CD8-positive, alpha-beta T cell (primary cell): ENCODE measurements at regions of chr7 and their contacts with region 1.

Region 1: GRCh38 chr7:148884299-148885022 is 370 bp upstream of the EZH2 start:
- DNase-seq: peak; percentile 87 to 97 (median 93)
- ATAC-seq: peak; percentile 89
- H3K4me3 ChIP-seq: peak overlapping the region; percentile 54 to 61
- H3K4me3 Mint-ChIP-seq: peak overlapping the region; percentile 87
- H3K27ac ChIP-seq: peak overlapping the region; percentile 47 to 67
- H3K27ac Mint-ChIP-seq: peak overlapping the region; percentile 89
- H3K4me1 ChIP-seq: peaks cover 8% of the 10 kb centered on the region
- H3K4me1 Mint-ChIP-seq: peaks cover 24% of the 10 kb centered on the region
- H3K27me3 ChIP-seq: peaks cover 0 to 4% of the 10 kb centered on the region in 2 experiments
- H3K27me3 Mint-ChIP-seq: no peaks in the 10 kb centered on the region
- CTCF ChIP-seq: no peak

Region 2: DNA sequence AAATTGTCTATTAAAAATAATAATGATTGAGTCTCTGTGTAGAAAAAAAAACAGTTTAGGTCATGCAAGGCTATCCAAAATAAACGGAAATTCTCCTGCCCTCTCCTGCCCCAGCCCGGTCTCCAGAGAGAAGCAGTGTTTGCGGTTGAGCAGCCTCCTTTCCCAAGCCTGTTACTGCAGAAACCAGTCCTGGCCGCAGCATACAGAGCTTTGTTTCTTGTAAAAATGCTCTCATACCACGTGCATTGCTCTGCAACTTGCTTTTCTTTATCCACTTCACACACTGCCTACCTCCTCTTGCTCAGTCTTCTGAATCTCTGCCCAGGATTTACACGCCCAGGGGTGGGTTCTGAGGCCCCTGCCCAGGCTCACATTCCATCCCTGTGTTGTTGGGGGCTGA is 220.1 kb before region 1 on chr7:
- CTCF ChIA-PET with region 1: no interaction called
- POLR2A ChIA-PET with region 1: no interaction called
- intact Hi-C with region 1: no loop called
- DNase-seq: no peak
- ATAC-seq: no peak
- H3K4me3 ChIP-seq: no peak overlapping the region
- H3K4me3 Mint-ChIP-seq: no peak overlapping the region
- H3K27ac ChIP-seq: no peak overlapping the region
- H3K27ac Mint-ChIP-seq: no peak overlapping the region
- H3K4me1 ChIP-seq: no peaks in the 10 kb centered on the region
- H3K4me1 Mint-ChIP-seq: peaks cover 6% of the 10 kb centered on the region
- H3K27me3 ChIP-seq: no peaks in the 10 kb centered on the region
- H3K27me3 Mint-ChIP-seq: no peaks in the 10 kb centered on the region
- CTCF ChIP-seq: no peak

Region 3: GRCh38 chr7:148856891-148857290 is 27.6 kb before region 1 on chr7:
- CTCF ChIA-PET with region 1: interaction called, 9 read pairs
- POLR2A ChIA-PET with region 1: interaction called, 5 read pairs
- intact Hi-C with region 1: loop called (anchors 2 kb)
- DNase-seq: peak in 2 of 9 experiments; percentile 34 to 47
- ATAC-seq: no peak
- H3K4me3 ChIP-seq: no peak overlapping the region
- H3K4me3 Mint-ChIP-seq: no peak overlapping the region
- H3K27ac ChIP-seq: no peak overlapping the region
- H3K27ac Mint-ChIP-seq: no peak overlapping the region
- H3K4me1 ChIP-seq: no peaks in the 10 kb centered on the region
- H3K4me1 Mint-ChIP-seq: peaks cover 12% of the 10 kb centered on the region
- H3K27me3 ChIP-seq: no peaks in the 10 kb centered on the region
- H3K27me3 Mint-ChIP-seq: no peaks in the 10 kb centered on the region
- CTCF ChIP-seq: no peak

Region 4: DNA sequence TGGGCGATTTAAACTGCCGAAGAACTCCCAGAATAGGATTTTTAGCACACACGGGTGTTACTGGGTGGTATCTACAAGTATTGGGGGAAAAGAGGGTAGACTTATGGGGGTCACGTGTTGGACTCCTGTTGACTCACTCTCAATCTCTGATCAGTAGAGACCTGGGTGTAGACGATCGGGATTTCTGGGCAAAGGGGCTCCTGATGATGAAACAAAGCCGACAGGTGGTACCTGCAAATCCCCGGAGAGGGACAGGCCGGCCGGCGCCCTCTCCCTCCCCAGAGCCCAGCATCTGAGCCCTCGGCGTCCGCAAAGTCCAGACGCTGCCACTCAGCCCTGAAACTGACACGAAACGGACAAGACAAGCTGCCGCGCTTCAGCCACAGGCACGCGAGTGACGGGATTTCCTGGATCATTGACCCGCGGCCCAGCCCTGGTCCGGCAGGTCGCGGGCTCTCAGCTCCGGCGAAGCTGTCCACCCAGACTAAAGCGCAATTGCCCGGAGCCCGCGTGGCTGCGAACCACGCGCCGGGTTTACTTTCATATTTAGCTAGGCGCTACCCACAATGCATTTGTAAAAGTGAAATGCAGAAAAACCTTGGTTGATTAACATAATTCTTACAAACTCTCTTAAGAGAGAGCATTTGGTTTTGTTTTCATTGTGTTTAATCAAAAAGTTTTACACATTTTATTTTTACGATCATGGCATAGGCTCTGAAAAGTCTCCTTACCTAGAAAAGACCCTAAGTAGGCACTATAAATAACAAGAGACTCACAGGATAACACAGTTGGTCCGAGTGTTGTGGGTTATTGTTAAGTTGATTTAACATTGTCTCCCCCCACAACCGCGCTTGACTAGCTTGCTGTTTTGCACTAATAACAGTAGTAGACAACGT is 56.5 kb after region 1 on chr7:
- CTCF ChIA-PET with region 1: interaction called, 9 read pairs
- POLR2A ChIA-PET with region 1: interaction called, 17 read pairs
- intact Hi-C with region 1: loop called (anchors 1 kb)
- DNase-seq: peak; percentile 31 to 87 (median 66)
- ATAC-seq: peak; percentile 65
- H3K4me3 ChIP-seq: peak overlapping the region; percentile 90 to 96
- H3K4me3 Mint-ChIP-seq: peak overlapping the region; percentile 98
- H3K27ac ChIP-seq: peak overlapping the region; percentile 89 to 91
- H3K27ac Mint-ChIP-seq: peak overlapping the region; percentile 98
- H3K4me1 ChIP-seq: peaks cover 9% of the 10 kb centered on the region
- H3K4me1 Mint-ChIP-seq: peaks cover 17% of the 10 kb centered on the region
- H3K27me3 ChIP-seq: no peaks in the 10 kb centered on the region
- H3K27me3 Mint-ChIP-seq: no peaks in the 10 kb centered on the region
- CTCF ChIP-seq: no peak

Region 5: GRCh38 chr7:148987010-148987750 is 102.7 kb after region 1 on chr7:
- CTCF ChIA-PET with region 1: no interaction called
- POLR2A ChIA-PET with region 1: interaction called, 7 read pairs
- intact Hi-C with region 1: loop called (anchors 1 to 2 kb)
- DNase-seq: peak; percentile 43 to 93 (median 80)
- ATAC-seq: peak; percentile 76
- H3K4me3 ChIP-seq: peak overlapping the region; percentile 82 to 97
- H3K4me3 Mint-ChIP-seq: peak overlapping the region; percentile 96
- H3K27ac ChIP-seq: peak overlapping the region; percentile 74 to 93
- H3K27ac Mint-ChIP-seq: peak overlapping the region; percentile 96
- H3K4me1 ChIP-seq: peaks cover 41% of the 10 kb centered on the region
- H3K4me1 Mint-ChIP-seq: peaks cover 52% of the 10 kb centered on the region
- H3K27me3 ChIP-seq: no peaks in the 10 kb centered on the region
- H3K27me3 Mint-ChIP-seq: no peaks in the 10 kb centered on the region
- CTCF ChIP-seq: no peak

Region 6: DNA sequence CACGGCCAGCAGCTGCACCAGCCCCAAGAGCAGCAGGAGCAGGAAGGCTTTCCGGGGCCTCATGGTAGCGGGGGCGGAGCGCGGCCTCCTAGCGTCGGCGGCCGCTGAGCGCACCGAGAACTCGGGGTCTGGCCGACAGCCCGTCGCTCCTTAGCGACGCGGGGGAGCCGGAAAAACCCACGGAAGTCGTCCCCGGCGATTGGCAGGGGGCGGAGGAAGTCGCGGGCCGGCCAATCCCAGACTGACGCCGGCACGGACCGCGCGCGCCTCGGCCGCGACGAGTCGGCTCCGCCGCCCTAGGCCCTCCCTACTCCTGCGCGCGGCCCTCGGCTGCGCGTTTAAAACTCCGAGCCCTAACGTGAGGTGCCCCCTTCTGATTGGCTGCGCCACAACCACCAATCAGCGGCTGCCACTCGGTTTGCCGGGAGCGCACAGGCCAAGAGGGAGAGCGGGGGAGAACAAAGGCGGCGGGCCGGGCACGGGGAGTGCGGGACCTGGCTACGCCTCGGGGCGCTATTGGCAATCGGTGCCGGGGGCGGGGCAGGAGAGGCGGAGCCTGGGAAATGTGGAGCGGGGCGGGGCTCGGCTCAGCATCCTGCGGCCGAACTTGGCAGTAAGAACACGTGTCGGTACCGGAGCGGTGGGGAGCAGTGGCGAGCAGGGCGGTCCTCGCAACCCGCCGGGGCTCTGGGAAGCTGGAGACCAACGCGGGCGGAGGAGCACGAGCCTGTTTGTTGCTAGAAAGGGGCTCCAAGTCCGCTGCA is 144.1 kb after region 1 on chr7 and contains the start of gene PDIA4:
- CTCF ChIA-PET with region 1: no interaction called
- POLR2A ChIA-PET with region 1: no interaction called
- intact Hi-C with region 1: loop called in 1 of 2 experiments (anchors 2 kb)
- DNase-seq: peak; percentile 98 to 100 (median 99)
- ATAC-seq: peak; percentile 88
- H3K4me3 ChIP-seq: peak within 1 kb of the TSS; percentile 58 to 78
- H3K4me3 Mint-ChIP-seq: peak within 1 kb of the TSS; percentile 87
- H3K27ac ChIP-seq: peak within 1 kb of the TSS; percentile 62 to 78
- H3K27ac Mint-ChIP-seq: peak within 1 kb of the TSS; percentile 94
- H3K4me1 ChIP-seq: peaks cover 27% of the 10 kb centered on the region
- H3K4me1 Mint-ChIP-seq: peaks cover 49% of the 10 kb centered on the region
- H3K27me3 ChIP-seq: no peaks in the 10 kb centered on the region
- H3K27me3 Mint-ChIP-seq: no peaks in the 10 kb centered on the region
- CTCF ChIP-seq: no peak
- total RNA-seq, gene PDIA4: 12.0 to 14.5 TPM

Region 7: DNA sequence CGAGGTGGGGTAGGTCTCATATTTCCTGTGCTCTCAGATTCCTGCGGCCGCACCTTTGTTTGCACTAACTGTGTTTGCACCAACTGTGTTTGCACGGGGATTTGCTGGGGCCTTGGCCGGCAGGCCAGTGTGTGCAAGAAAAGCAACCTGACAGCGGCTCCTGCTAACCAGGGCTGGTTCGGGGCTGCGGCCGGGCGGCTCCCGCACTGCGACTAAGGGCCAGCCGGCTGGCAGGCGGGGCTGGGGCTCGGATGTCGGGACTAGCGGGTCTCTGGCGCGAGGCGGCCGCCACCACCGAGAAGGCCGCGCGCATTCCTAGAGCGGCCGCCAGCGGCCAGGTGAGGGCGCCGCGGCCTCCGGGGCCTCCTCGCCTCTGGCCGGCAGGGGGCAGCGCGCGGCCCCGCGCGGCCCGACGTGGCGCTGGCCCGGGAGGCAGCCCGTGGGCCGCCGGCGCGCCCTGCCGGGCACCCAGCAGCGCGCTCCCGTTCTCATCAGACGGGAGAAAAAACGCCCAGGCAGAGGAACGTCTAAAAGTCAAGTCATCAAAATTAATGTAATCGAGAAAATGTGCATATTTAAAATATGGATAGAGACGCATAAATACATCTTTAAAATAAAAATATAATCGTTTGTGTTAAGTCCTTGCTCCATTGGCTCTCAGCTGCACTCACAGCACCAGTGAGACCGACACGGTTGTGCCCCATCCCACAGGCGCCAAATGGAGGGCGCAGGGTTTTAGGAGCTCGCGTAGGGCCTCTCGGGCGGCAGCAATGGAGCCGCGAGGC is 537.9 kb after region 1 on chr7:
- CTCF ChIA-PET with region 1: no interaction called
- POLR2A ChIA-PET with region 1: no interaction called
- intact Hi-C with region 1: loop called in 1 of 2 experiments (anchors 2 kb)
- DNase-seq: peak; percentile 50 to 91 (median 66)
- ATAC-seq: peak; percentile 97
- H3K4me3 ChIP-seq: peak overlapping the region; percentile 71 to 76
- H3K4me3 Mint-ChIP-seq: peak overlapping the region; percentile 76
- H3K27ac ChIP-seq: peak overlapping the region; percentile 60 to 82
- H3K27ac Mint-ChIP-seq: peak overlapping the region; percentile 75
- H3K4me1 ChIP-seq: peaks cover 5% of the 10 kb centered on the region
- H3K4me1 Mint-ChIP-seq: peaks cover 12% of the 10 kb centered on the region
- H3K27me3 ChIP-seq: no peaks in the 10 kb centered on the region
- H3K27me3 Mint-ChIP-seq: no peaks in the 10 kb centered on the region
- CTCF ChIP-seq: no peak